ENCODE measurements at regions of chr6 and their contacts with region 1.

Region 1: GRCh38 chr6:15245361-15246216 is at the start of gene JARID2:
- DNase-seq: peak; percentile 98
- ATAC-seq: peak; percentile 61
- H3K4me3 ChIP-seq: peak within 1 kb of the TSS; percentile 78
- H3K27ac ChIP-seq: peak within 1 kb of the TSS; percentile 62
- H3K4me1 ChIP-seq: peaks cover 16% of the 10 kb centered on the region
- H3K27me3 ChIP-seq: no peaks in the 10 kb centered on the region
- CTCF ChIP-seq: no peak
- total RNA-seq, gene JARID2: 11.0 and 13.1 TPM in 2 replicates

Region 2: GRCh38 chr6:14210663-14211561 is 1034.7 kb before region 1 on chr6:
- CTCF ChIA-PET with region 1: no interaction called
- POLR2A ChIA-PET with region 1: no interaction called
- intact Hi-C with region 1: loop called (anchors 2 kb)
- DNase-seq: peak; percentile 94
- ATAC-seq: peak; percentile 91
- H3K4me3 ChIP-seq: peak overlapping the region; percentile 82
- H3K27ac ChIP-seq: peak overlapping the region; percentile 61
- H3K4me1 ChIP-seq: peaks cover 20% of the 10 kb centered on the region
- H3K27me3 ChIP-seq: no peaks in the 10 kb centered on the region
- CTCF ChIP-seq: peak; percentile 55

Region 3: GRCh38 chr6:14584450-14584849 is 661.1 kb before region 1 on chr6:
- CTCF ChIA-PET with region 1: interaction called, 10 read pairs
- POLR2A ChIA-PET with region 1: no interaction called
- intact Hi-C with region 1: no loop called
- DNase-seq: peak; percentile 48
- ATAC-seq: peak; percentile 73
- H3K4me3 ChIP-seq: no peak overlapping the region
- H3K27ac ChIP-seq: no peak overlapping the region
- H3K4me1 ChIP-seq: no peaks in the 10 kb centered on the region
- H3K27me3 ChIP-seq: no peaks in the 10 kb centered on the region
- CTCF ChIP-seq: peak; percentile 48

Region 4: GRCh38 chr6:14841901-14842421 is 403.6 kb before region 1 on chr6:
- CTCF ChIA-PET with region 1: no interaction called
- POLR2A ChIA-PET with region 1: no interaction called
- intact Hi-C with region 1: loop called (anchors 1 kb)
- DNase-seq: peak; percentile 32
- ATAC-seq: peak; percentile 95
- H3K4me3 ChIP-seq: no peak overlapping the region
- H3K27ac ChIP-seq: no peak overlapping the region
- H3K4me1 ChIP-seq: peaks cover 9% of the 10 kb centered on the region
- H3K27me3 ChIP-seq: no peaks in the 10 kb centered on the region
- CTCF ChIP-seq: no peak

Region 5: DNA sequence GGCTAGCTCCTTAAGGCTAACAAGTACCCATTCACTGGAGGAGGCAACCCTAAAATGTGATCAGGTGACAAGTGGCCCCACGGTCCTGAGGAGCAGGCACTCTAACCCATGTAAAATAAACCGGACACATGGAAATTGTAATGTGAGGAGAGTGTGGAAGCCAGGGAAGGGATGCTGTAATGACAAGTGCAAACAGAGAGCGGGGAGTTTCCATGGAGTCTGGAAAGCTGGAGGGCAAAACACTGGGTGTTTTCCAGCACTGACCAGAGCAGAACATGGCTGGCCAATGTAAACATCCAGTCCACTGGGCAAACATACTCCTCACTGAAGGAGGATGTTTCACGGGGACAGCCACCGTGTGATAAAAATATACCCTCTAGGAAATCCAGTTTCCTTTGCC is 218.8 kb before region 1 on chr6:
- CTCF ChIA-PET with region 1: no interaction called
- POLR2A ChIA-PET with region 1: no interaction called
- intact Hi-C with region 1: loop called (anchors 5 kb)
- DNase-seq: peak; percentile 78
- ATAC-seq: peak; percentile 99
- H3K4me3 ChIP-seq: no peak overlapping the region
- H3K27ac ChIP-seq: peak overlapping the region; percentile 49
- H3K4me1 ChIP-seq: peaks cover 11% of the 10 kb centered on the region; the same call in 1 of the 2 replicates
- H3K27me3 ChIP-seq: no peaks in the 10 kb centered on the region
- CTCF ChIP-seq: no peak

Region 6: DNA sequence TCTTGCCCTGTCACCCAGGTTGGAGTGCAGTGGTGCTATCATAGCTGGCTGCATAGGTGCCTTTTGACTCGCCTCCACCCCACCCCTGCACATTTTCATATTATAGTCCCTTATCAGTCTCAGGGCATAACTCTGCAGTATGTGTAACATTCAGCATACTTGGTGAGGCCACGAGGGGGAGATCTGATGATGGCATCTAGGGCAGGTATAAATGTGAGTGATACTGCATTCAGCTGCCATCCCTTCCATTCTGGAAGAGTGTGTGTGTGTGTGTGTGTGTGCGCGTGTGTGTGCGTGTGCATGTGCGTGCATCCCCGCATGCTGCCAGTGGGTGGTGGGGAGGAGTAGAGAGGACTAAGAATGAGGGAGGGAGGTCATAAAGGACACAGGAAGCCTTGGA is 81.7 kb after region 1 on chr6:
- CTCF ChIA-PET with region 1: no interaction called
- POLR2A ChIA-PET with region 1: no interaction called
- intact Hi-C with region 1: no loop called
- DNase-seq: peak; percentile 37
- ATAC-seq: peak; percentile 38
- H3K4me3 ChIP-seq: no peak overlapping the region
- H3K27ac ChIP-seq: no peak overlapping the region
- H3K4me1 ChIP-seq: peaks cover 45% of the 10 kb centered on the region
- H3K27me3 ChIP-seq: no peaks in the 10 kb centered on the region
- CTCF ChIP-seq: peak; percentile 50

Region 7: DNA sequence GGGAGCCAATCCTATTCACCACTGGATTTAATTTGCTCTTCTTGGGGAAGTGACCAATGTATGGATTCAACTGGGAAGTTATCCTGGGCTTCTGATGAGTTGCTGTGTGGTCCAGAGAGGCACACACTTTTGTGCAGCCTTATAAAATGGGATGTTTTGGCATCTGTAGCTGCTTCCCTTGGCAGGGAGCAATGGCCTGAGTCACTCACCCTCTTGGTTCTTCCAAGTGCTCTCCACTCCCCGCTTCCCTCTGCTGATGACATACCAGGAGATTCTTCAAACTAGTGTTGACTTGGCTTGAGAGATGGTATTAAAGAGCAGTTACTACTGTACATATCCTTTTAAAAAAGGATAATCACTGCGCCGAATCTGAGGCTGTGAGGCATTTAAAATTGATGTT is 106.0 kb after region 1 on chr6:
- CTCF ChIA-PET with region 1: no interaction called
- POLR2A ChIA-PET with region 1: no interaction called
- intact Hi-C with region 1: loop called (anchors 2 kb)
- DNase-seq: peak; percentile 79
- ATAC-seq: peak; percentile 96
- H3K4me3 ChIP-seq: no peak overlapping the region
- H3K27ac ChIP-seq: peak overlapping the region; percentile 22; the same call in 1 of the 2 replicates
- H3K4me1 ChIP-seq: peaks cover 33% of the 10 kb centered on the region
- H3K27me3 ChIP-seq: no peaks in the 10 kb centered on the region
- CTCF ChIP-seq: no peak

Region 8: DNA sequence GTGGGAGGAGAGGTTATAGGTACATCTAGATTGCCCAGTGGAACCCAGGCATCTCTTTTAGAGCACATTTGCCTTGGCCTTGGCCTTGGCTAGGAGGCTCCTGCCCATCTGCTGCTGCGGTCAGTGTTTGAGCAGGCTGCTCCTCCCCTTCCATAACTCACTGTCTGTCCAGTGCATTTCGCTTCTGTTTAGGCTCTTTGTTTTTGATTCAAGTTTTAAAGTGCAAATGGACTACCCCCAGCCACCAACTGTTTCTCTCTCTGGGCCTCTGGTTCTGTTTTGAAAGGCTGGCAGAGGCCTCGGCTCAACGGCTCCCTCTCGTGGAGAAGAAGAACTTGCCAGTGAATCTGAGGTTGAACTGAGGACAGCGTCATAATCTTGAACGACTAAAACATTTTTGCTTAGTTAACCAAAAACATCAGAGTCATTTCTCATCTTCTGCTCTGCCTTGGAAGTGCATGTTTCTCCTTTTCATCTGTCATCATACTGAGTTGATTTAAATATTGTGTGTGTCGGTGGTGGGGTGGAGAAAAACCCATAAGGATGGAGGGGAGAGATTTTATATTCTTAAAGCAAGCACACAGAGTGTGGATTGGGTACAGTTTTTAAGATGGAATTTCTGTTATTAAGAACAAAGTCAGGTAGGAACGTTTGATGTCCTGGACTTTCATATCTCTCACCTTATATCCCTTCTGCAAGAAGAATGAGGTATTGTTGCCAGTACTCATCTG is 245.8 kb after region 1 on chr6:
- CTCF ChIA-PET with region 1: no interaction called
- POLR2A ChIA-PET with region 1: no interaction called
- intact Hi-C with region 1: loop called (anchors 5 kb)
- DNase-seq: peak; percentile 72
- ATAC-seq: peak; percentile 82
- H3K4me3 ChIP-seq: no peak overlapping the region
- H3K27ac ChIP-seq: no peak overlapping the region
- H3K4me1 ChIP-seq: no peaks in the 10 kb centered on the region
- H3K27me3 ChIP-seq: no peaks in the 10 kb centered on the region
- CTCF ChIP-seq: peak; percentile 95

Measured in PC-3 (cell line).